ENCODE measurements at regions of chr13 and their contacts with region 1.

Region 1: DNA sequence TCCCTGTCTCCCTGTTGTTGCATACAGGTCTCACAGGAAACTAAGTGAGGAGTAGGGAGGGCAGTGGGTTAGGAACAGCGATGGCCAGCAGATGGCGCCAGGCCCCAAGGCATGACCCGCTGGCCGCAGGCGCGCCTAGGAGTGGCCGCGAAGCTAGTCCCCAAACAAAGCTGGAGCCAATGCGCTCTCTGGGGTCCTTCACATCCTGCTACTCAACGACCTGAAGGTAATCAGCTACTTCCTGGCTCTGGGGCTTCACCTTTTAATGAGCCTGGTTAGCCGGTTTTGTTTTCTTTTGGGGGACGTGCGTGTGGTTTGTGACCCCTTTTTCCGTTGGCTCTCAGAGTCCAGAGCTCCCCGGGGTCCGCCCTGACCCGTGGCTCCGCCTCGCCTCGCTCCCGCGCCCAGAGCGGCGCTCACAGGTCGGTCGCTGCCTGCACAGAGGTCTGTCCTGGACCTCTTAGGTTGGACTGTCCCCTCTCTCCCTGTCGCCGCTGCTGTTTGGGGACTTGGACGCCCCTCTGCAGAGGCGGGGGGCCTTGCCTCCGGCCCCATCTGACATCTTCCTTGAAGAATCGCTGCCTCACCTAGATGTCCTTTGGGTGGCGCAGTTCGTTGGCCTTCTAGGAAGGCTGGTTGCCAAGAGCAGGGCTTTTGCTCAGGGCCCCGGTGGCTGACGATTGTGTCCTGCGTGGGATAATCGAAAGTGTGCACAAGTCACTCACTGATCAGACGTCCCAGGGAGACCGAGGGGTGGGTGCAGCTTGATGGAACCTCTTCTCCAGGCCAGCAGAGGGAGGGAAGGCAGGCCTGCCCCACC is 62.1 kb upstream of the GTF3A start:
- DNase-seq: peak; percentile 73 to 97 (median 86)

Region 2: GRCh38 chr13:27270594-27271520 is 91.4 kb before region 1 on chr13 and contains the start of gene RASL11A:
- intact Hi-C with region 1: loop called (anchors 5 kb)
- DNase-seq: peak; percentile 73 to 98 (median 82)

Region 3: GRCh38 chr13:27523346-27524073 is 161.2 kb after region 1 on chr13:
- intact Hi-C with region 1: no loop called
- DNase-seq: no peak

Region 4: GRCh38 chr13:27896726-27897125 is 534.5 kb after region 1 on chr13:
- intact Hi-C with region 1: no loop called
- DNase-seq: no peak

Region 5: GRCh38 chr13:27980280-27980998 is 618.2 kb after region 1 on chr13:
- intact Hi-C with region 1: loop called (anchors 5 kb)
- DNase-seq: peak in 1 of 10 donors; percentile 74

Measured in posterior cingulate gyrus (tissue), 11 donors.